ENCODE measurements at regions of chrX and their contacts with region 1.

Region 1: GRCh38 chrX:124217304-124218251 is 114.9 kb upstream of the TEX13D start:
- DNase-seq: peak; percentile 75 to 89 (median 80)
- H3K4me3 ChIP-seq: peak overlapping the region in 1 of 2 donors; percentile 1
- H3K4me3 Mint-ChIP-seq: peak overlapping the region; percentile 57 to 82 (median 76)
- H3K27ac ChIP-seq: peak overlapping the region; percentile 59
- H3K27ac Mint-ChIP-seq: peak overlapping the region; percentile 84 to 95 (median 90)
- H3K4me1 ChIP-seq: peaks cover 73% of the 10 kb centered on the region
- H3K4me1 Mint-ChIP-seq: peaks cover 56 to 95% (median 77%) of the 10 kb centered on the region in 4 donors
- H3K27me3 ChIP-seq: no peaks in the 10 kb centered on the region
- H3K27me3 Mint-ChIP-seq: no peaks in the 10 kb centered on the region

Region 2: GRCh38 chrX:124232523-124233201 is 15.1 kb after region 1 on chrX:
- CTCF ChIA-PET with region 1: no interaction called
- POLR2A ChIA-PET with region 1: interaction called, 10 read pairs
- intact Hi-C with region 1: no loop called
- DNase-seq: no peak
- H3K4me3 ChIP-seq: no peak overlapping the region
- H3K4me3 Mint-ChIP-seq: peak overlapping the region in 1 of 8 donors; percentile 5
- H3K27ac ChIP-seq: no peak overlapping the region
- H3K27ac Mint-ChIP-seq: no peak overlapping the region
- H3K4me1 ChIP-seq: peaks cover 5% of the 10 kb centered on the region
- H3K4me1 Mint-ChIP-seq: peaks cover 5 to 30% (median 9%) of the 10 kb centered on the region in 4 donors
- H3K27me3 ChIP-seq: no peaks in the 10 kb centered on the region
- H3K27me3 Mint-ChIP-seq: no peaks in the 10 kb centered on the region

Region 3: GRCh38 chrX:124338733-124339514 is 121.3 kb after region 1 on chrX:
- CTCF ChIA-PET with region 1: interaction called, 3 read pairs
- POLR2A ChIA-PET with region 1: interaction called, 77 read pairs
- intact Hi-C with region 1: no loop called
- DNase-seq: peak; percentile 35 to 61 (median 43)
- H3K4me3 ChIP-seq: no peak overlapping the region
- H3K4me3 Mint-ChIP-seq: peak overlapping the region in 1 of 8 donors; percentile 52
- H3K27ac ChIP-seq: no peak overlapping the region
- H3K27ac Mint-ChIP-seq: peak overlapping the region in 4 of 7 donors; percentile 5 to 60 (median 46)
- H3K4me1 ChIP-seq: peaks cover 40% of the 10 kb centered on the region
- H3K4me1 Mint-ChIP-seq: peaks cover 23 to 43% (median 30%) of the 10 kb centered on the region in 4 donors
- H3K27me3 ChIP-seq: no peaks in the 10 kb centered on the region
- H3K27me3 Mint-ChIP-seq: no peaks in the 10 kb centered on the region

Region 4: GRCh38 chrX:124736553-124737240 is 519.1 kb after region 1 on chrX:
- CTCF ChIA-PET with region 1: no interaction called
- POLR2A ChIA-PET with region 1: no interaction called
- intact Hi-C with region 1: loop called (anchors 5 kb)
- DNase-seq: peak; percentile 63 to 67 (median 65)
- H3K4me3 ChIP-seq: no peak overlapping the region
- H3K4me3 Mint-ChIP-seq: peak overlapping the region; percentile 66 to 78 (median 72)
- H3K27ac ChIP-seq: no peak overlapping the region
- H3K27ac Mint-ChIP-seq: peak overlapping the region; percentile 65 to 88 (median 82)
- H3K4me1 ChIP-seq: peaks cover 39% of the 10 kb centered on the region
- H3K4me1 Mint-ChIP-seq: peaks cover 15 to 43% (median 26%) of the 10 kb centered on the region in 4 donors
- H3K27me3 ChIP-seq: no peaks in the 10 kb centered on the region
- H3K27me3 Mint-ChIP-seq: no peaks in the 10 kb centered on the region